ENCODE measurements at regions of chr16 and their contacts with region 1.

Region 1: GRCh38 chr16:13390093-13390985 is 488.9 kb downstream of the SHISA9 start:
- DNase-seq: peak; percentile 88
- ATAC-seq: peak; percentile 84
- H3K4me3 ChIP-seq: 0 out of 2 replicates have a peak overlapping the region, but pooled peaks have one; percentile 25
- H3K27ac ChIP-seq: peak overlapping the region; percentile 90
- H3K4me1 ChIP-seq: peaks cover 28% of the 10 kb centered on the region
- H3K27me3 ChIP-seq: no peaks in the 10 kb centered on the region
- CTCF ChIP-seq: no peak
- EP300 ChIP-seq: peak; percentile 76 to 80; a peak in 2 of 4 replicates
- POLR2A ChIP-seq: peak; percentile 34; the same call in 1 of the 2 replicates
- RAD21 ChIP-seq: peak; percentile 13; the same call in 1 of the 2 replicates

Region 2: DNA sequence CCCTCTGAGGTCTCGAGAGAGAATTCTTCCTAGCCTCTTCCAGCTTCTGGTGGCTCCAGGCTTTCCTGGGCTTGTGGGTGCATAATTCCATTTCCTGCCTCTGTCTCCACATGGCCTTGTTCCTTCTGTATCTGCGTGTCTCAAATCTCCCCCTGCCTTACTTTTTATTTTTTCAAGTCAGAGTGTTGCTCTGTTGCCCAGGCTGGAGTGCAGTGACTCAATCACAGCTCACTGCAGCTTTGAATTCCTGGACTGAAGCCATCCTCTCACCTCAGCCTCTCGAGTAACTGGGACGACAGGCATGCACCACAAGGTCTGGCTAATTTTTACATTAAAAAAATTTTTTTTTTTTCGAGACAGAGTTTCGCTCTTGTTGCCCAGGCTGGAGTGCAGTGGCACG is 368.3 kb before region 1 on chr16:
- CTCF ChIA-PET with region 1: no interaction called
- POLR2A ChIA-PET with region 1: no interaction called
- RAD21 ChIA-PET with region 1: no interaction called
- SMC1A ChIA-PET with region 1: no interaction called
- in situ Hi-C with region 1: no loop called
- intact Hi-C with region 1: no loop called
- DNase-seq: no peak
- ATAC-seq: no peak
- H3K4me3 ChIP-seq: no peak overlapping the region
- H3K27ac ChIP-seq: no peak overlapping the region
- H3K4me1 ChIP-seq: no peaks in the 10 kb centered on the region
- H3K27me3 ChIP-seq: no peaks in the 10 kb centered on the region
- CTCF ChIP-seq: no peak
- EP300 ChIP-seq: no peak
- POLR2A ChIP-seq: no peak
- RAD21 ChIP-seq: no peak

Region 3: GRCh38 chr16:13376174-13376573 is 14.2 kb before region 1 on chr16:
- CTCF ChIA-PET with region 1: interaction called, 4 read pairs
- POLR2A ChIA-PET with region 1: interaction called, 11 read pairs
- RAD21 ChIA-PET with region 1: interaction called, 9 read pairs
- SMC1A ChIA-PET with region 1: interaction called, 19 read pairs
- in situ Hi-C with region 1: no loop called
- intact Hi-C with region 1: no loop called
- DNase-seq: no peak
- ATAC-seq: peak; percentile 84
- H3K4me3 ChIP-seq: no peak overlapping the region
- H3K27ac ChIP-seq: no peak overlapping the region
- H3K4me1 ChIP-seq: no peaks in the 10 kb centered on the region; the same call in 1 of the 2 replicates
- H3K27me3 ChIP-seq: no peaks in the 10 kb centered on the region
- CTCF ChIP-seq: no peak
- EP300 ChIP-seq: peak in 1 of 2 experiments; percentile 29; a peak in 1 of 4 replicates
- POLR2A ChIP-seq: no peak
- RAD21 ChIP-seq: no peak

Region 4: DNA sequence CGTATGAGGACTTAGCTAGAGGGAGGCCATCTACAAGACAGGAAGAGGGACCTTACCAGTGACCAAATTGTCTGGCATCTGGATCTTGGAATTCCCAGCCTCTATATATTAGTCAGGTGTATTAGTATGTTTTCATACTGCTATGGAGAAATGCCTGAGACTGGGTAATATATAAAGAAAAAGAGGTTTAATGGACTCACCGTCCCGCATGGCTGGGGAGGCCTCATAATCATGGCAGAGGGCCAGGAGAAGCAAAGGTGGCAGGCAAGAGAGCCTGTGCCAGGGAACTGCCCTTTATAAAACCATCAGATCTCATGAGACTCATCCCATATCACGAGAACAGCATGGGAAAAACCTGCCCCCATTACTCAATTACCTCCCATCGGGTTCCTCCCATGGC is 11.3 kb after region 1 on chr16:
- CTCF ChIA-PET with region 1: interaction called, 4 read pairs
- POLR2A ChIA-PET with region 1: no interaction called
- RAD21 ChIA-PET with region 1: no interaction called
- SMC1A ChIA-PET with region 1: interaction called, 14 read pairs
- in situ Hi-C with region 1: no loop called
- intact Hi-C with region 1: no loop called
- DNase-seq: no peak
- ATAC-seq: no peak
- H3K4me3 ChIP-seq: no peak overlapping the region
- H3K27ac ChIP-seq: no peak overlapping the region
- H3K4me1 ChIP-seq: no peaks in the 10 kb centered on the region
- H3K27me3 ChIP-seq: no peaks in the 10 kb centered on the region
- CTCF ChIP-seq: no peak
- EP300 ChIP-seq: no peak
- POLR2A ChIP-seq: no peak
- RAD21 ChIP-seq: no peak

Region 5: DNA sequence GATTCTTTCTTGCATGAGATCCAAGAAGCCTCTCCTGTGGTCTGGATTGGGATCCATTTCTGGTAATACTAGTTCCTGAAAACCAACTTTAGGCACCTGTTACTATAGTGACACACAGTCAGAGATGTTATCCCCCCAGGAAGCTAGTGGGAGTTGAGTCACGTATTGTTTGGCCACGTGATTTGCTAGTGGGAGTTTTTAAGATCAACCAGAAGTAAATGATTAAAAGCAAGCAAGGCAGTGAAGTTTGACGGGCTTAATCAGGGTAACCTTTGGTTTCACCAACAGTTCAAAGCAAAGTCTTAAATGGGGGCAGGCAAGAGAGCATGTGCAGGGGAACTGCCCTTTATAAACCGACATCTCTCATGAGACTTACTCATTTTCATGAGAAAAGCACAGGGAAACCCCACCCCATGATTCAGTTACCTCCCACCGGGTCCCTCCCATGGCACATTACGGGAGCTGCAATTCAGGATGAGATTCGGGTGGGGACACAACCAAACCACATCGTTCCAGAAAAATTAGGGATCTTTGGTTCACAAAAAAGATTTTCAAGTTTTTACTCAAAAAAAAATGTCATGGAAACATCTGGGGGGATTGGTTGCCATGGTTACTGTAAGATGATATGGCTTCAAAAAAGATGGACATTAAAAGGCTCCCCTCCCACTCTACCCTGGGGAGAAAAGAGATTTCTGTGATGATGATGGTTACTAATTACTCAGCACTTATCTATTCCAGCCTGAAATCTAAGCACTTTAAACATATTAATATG is 46.5 kb after region 1 on chr16:
- CTCF ChIA-PET with region 1: interaction called, 26 read pairs
- POLR2A ChIA-PET with region 1: interaction called, 6 read pairs
- RAD21 ChIA-PET with region 1: interaction called, 36 read pairs
- SMC1A ChIA-PET with region 1: interaction called, 40 read pairs
- in situ Hi-C with region 1: no loop called
- intact Hi-C with region 1: loop called (anchors 1 kb)
- DNase-seq: peak; percentile 86
- ATAC-seq: peak; percentile 85
- H3K4me3 ChIP-seq: no peak overlapping the region
- H3K27ac ChIP-seq: peak overlapping the region; percentile 46
- H3K4me1 ChIP-seq: peaks cover 25% of the 10 kb centered on the region
- H3K27me3 ChIP-seq: no peaks in the 10 kb centered on the region
- CTCF ChIP-seq: no peak; a peak in 1 of 6 replicates
- EP300 ChIP-seq: peak; percentile 53 to 88; a peak in 3 of 4 replicates
- POLR2A ChIP-seq: no peak
- RAD21 ChIP-seq: peak; percentile 13; the same call in 1 of the 2 replicates

Region 6: GRCh38 chr16:13552062-13552959 is 162.0 kb after region 1 on chr16:
- CTCF ChIA-PET with region 1: no interaction called
- POLR2A ChIA-PET with region 1: no interaction called
- RAD21 ChIA-PET with region 1: interaction called, 4 read pairs
- SMC1A ChIA-PET with region 1: interaction called, 10 read pairs
- in situ Hi-C with region 1: no loop called
- intact Hi-C with region 1: loop called (anchors 2 kb)
- DNase-seq: peak; percentile 71
- ATAC-seq: no peak; the same call in 1 of the 3 replicates
- H3K4me3 ChIP-seq: no peak overlapping the region
- H3K27ac ChIP-seq: no peak overlapping the region
- H3K4me1 ChIP-seq: no peaks in the 10 kb centered on the region
- H3K27me3 ChIP-seq: no peaks in the 10 kb centered on the region
- CTCF ChIP-seq: no peak
- EP300 ChIP-seq: 0 out of 4 replicates have a peak, but pooled peaks of 1 of the 2 experiments have one; percentile 46
- POLR2A ChIP-seq: no peak
- RAD21 ChIP-seq: no peak